Body of pancreas (tissue), 4 donors: ENCODE measurements at regions of chr7 and their contacts with region 1.

Region 1: GRCh38 chr7:13262929-13263530 is 575.6 kb downstream of the ARL4A start:
- DNase-seq: no peak
- ATAC-seq: peak; percentile 52
- H3K4me3 ChIP-seq: no peak overlapping the region
- H3K27ac ChIP-seq: no peak overlapping the region
- H3K4me1 ChIP-seq: no peaks in the 10 kb centered on the region
- H3K27me3 ChIP-seq: no peaks in the 10 kb centered on the region
- CTCF ChIP-seq: peak; percentile 24 to 80 (median 69)
- POLR2A ChIP-seq: no peak

Region 2: GRCh38 chr7:12539681-12540080 is 723.3 kb before region 1 on chr7:
- intact Hi-C with region 1: loop called (anchors 10 kb)
- DNase-seq: no peak
- ATAC-seq: no peak
- H3K4me3 ChIP-seq: no peak overlapping the region
- H3K27ac ChIP-seq: no peak overlapping the region
- H3K4me1 ChIP-seq: no peaks in the 10 kb centered on the region
- H3K27me3 ChIP-seq: no peaks in the 10 kb centered on the region
- CTCF ChIP-seq: no peak
- POLR2A ChIP-seq: no peak

Region 3: DNA sequence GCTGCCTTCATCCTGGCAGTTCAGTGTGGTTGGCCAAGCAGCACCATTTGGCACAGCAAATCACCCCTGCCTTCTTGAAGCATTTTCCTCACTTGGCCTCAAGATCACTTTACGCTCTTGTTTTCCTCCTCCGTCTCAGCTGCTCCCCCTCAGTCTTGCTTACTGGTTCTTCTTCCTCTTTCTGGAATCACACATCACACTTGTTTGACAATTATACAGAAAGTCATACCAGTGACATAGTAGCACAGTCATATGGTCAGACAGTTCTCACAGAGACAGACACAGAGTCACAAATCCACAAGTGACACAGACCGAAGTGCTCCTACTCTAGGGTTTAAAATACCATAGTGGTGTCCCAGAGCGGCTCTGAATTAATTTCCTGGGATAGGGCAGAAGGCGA is 619.4 kb before region 1 on chr7:
- intact Hi-C with region 1: loop called (anchors 5 kb)
- DNase-seq: no peak
- ATAC-seq: no peak
- H3K4me3 ChIP-seq: no peak overlapping the region
- H3K27ac ChIP-seq: no peak overlapping the region
- H3K4me1 ChIP-seq: no peaks in the 10 kb centered on the region
- H3K27me3 ChIP-seq: no peaks in the 10 kb centered on the region
- CTCF ChIP-seq: no peak
- POLR2A ChIP-seq: no peak